Esophagus muscularis mucosa (tissue), 4 donors: ENCODE measurements at regions of chr6 and their contacts with region 1.

Region 1: GRCh38 chr6:83514866-83515466 is 2.6 kb downstream of the PRSS35 start:
- DNase-seq: no peak
- H3K4me3 ChIP-seq: no peak overlapping the region
- H3K27ac ChIP-seq: no peak overlapping the region
- H3K4me1 ChIP-seq: peaks cover 0 to 20% (median 17%) of the 10 kb centered on the region in 4 donors
- H3K27me3 ChIP-seq: no peaks in the 10 kb centered on the region
- CTCF ChIP-seq: peak; percentile 77 to 82 (median 81)
- EP300 ChIP-seq: no peak
- POLR2A ChIP-seq: no peak

Region 2: GRCh38 chr6:83221889-83222479 is 293.0 kb before region 1 on chr6:
- intact Hi-C with region 1: loop called (anchors 2 kb)
- DNase-seq: no peak
- H3K4me3 ChIP-seq: no peak overlapping the region
- H3K27ac ChIP-seq: no peak overlapping the region
- H3K4me1 ChIP-seq: peaks cover 0 to 5% (median 0%) of the 10 kb centered on the region in 4 donors
- H3K27me3 ChIP-seq: no peaks in the 10 kb centered on the region
- CTCF ChIP-seq: peak; percentile 44 to 55 (median 53)
- EP300 ChIP-seq: no peak
- POLR2A ChIP-seq: no peak

Region 3: GRCh38 chr6:83756565-83756964 is 241.6 kb after region 1 on chr6:
- intact Hi-C with region 1: no loop called
- DNase-seq: no peak
- H3K4me3 ChIP-seq: no peak overlapping the region
- H3K27ac ChIP-seq: no peak overlapping the region
- H3K4me1 ChIP-seq: no peaks in the 10 kb centered on the region
- H3K27me3 ChIP-seq: no peaks in the 10 kb centered on the region
- CTCF ChIP-seq: no peak
- EP300 ChIP-seq: no peak
- POLR2A ChIP-seq: no peak